IMR-90 (cell line): ENCODE measurements at regions of chr12 and their contacts with region 1.

Region 1: GRCh38 chr12:56724972-56725722 is at the start of gene NACA:
- DNase-seq: peak; percentile 98
- ATAC-seq: peak; percentile 93
- H3K4me3 ChIP-seq: peak within 1 kb of the TSS; percentile 80
- H3K27ac ChIP-seq: peak within 1 kb of the TSS; percentile 76
- H3K4me1 ChIP-seq: peaks cover 5% of the 10 kb centered on the region
- H3K27me3 ChIP-seq: no peaks in the 10 kb centered on the region
- CTCF ChIP-seq: no peak
- POLR2A ChIP-seq: peak; percentile 97
- RAD21 ChIP-seq: no peak; the same call in 1 of the 2 replicates
- total RNA-seq, gene NACA: 1,223 and 1,512 TPM in 2 replicates

Region 2: DNA sequence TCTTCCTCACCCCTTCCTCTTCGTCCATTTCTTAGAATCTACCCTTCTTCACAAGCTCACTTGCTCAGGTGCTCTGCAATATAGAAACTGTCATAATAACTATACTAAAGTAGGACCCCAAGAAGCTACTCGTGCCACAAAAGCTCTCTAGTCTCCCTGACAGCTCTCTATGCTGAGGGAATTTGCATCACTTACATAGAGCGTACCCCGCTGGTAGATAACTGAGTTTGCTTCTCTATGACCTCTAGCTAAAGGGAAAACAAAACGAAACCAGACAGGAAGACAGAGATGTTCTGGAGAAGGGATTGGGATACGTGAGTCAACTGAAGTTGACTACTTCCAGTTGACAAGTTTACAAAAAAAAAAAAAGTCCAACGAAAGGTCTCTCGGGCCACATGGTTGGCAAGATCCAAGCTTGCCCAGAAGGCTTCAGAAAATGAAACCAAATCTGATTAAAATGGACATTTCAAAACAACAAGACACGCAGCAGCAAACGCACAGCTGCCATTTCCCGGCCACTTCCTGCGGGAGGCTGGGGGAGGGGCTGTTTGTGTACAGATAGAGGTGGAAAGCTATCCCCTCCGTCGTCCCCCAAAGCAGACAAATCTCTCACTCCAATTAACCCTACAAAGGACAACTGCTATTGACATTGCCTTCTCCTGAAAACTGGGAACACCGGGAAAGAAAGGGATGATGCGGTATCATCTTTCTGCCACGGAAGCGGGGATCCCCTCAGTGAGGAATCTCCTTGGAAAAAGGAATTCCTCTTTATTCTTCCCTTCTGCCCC is 96.3 kb before region 1 on chr12:
- CTCF ChIA-PET with region 1: no interaction called
- POLR2A ChIA-PET with region 1: interaction called, 3 read pairs
- dilution Hi-C with region 1: no loop called
- in situ Hi-C with region 1: no loop called
- intact Hi-C with region 1: loop called (anchors 2 kb)
- DNase-seq: peak; percentile 74
- ATAC-seq: peak; percentile 11; the same call in 1 of the 2 replicates
- H3K4me3 ChIP-seq: peak overlapping the region; percentile 91
- H3K27ac ChIP-seq: peak overlapping the region; percentile 88
- H3K4me1 ChIP-seq: peaks cover 14% of the 10 kb centered on the region
- H3K27me3 ChIP-seq: no peaks in the 10 kb centered on the region
- CTCF ChIP-seq: no peak
- POLR2A ChIP-seq: no peak
- RAD21 ChIP-seq: no peak

Region 3: DNA sequence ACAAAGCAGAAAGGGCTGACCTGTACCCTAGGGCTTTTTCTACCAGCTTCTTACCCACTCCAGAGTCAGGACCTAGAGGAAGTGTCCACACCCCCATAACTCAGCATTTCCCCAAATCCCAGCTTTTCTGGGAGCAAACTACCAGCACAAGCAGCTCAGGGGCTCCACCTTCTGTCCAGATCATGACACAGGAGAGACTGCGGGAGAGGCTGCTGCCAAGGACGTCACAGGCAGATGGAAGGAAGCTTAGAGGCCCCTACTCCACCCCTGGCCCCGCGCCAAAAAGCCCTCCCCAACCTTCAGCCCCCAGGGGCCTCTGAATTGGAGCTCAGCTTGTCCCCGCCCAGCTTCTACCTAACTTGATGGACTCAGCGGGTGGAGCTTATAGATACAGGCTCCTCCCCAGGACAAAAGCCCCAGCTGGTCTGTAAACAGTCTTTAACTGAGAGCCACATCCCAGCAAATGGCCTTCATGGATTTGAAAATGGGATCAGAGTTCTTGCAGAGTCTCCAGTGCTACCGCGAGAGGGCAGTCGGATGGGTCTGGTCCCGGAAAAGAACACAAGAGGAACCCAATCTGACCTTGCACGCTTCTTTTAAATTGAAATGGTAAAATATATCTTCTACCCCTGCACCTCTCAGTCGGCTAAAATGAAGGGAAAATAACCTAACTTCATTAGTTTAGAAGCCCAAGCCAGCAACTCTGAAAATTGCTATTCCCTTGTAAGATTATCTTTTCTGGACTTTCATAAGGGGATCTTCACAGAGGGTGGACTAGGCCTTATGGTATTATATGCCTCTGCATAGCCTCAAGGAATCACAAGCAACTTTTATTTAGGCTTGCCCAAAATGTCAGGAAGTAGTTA is 88.2 kb before region 1 on chr12:
- CTCF ChIA-PET with region 1: interaction called, 4 read pairs
- POLR2A ChIA-PET with region 1: interaction called, 7 read pairs
- dilution Hi-C with region 1: no loop called
- in situ Hi-C with region 1: no loop called
- intact Hi-C with region 1: loop called (anchors 2 kb)
- DNase-seq: peak; percentile 100
- ATAC-seq: peak; percentile 81
- H3K4me3 ChIP-seq: peak overlapping the region; percentile 69
- H3K27ac ChIP-seq: peak overlapping the region; percentile 84
- H3K4me1 ChIP-seq: peaks cover 10% of the 10 kb centered on the region
- H3K27me3 ChIP-seq: no peaks in the 10 kb centered on the region
- CTCF ChIP-seq: peak; percentile 82
- POLR2A ChIP-seq: no peak
- RAD21 ChIP-seq: peak; percentile 79